Activated CD4-positive, alpha-beta T cell treated with anti-CD3 and anti-CD28 coated beads, Interleukin-2, amount 10 ng/mL, durations not matched to agents 7 days and 5 days (primary cell): ENCODE measurements at regions of chr6 and their contacts with region 1.

Region 1: DNA sequence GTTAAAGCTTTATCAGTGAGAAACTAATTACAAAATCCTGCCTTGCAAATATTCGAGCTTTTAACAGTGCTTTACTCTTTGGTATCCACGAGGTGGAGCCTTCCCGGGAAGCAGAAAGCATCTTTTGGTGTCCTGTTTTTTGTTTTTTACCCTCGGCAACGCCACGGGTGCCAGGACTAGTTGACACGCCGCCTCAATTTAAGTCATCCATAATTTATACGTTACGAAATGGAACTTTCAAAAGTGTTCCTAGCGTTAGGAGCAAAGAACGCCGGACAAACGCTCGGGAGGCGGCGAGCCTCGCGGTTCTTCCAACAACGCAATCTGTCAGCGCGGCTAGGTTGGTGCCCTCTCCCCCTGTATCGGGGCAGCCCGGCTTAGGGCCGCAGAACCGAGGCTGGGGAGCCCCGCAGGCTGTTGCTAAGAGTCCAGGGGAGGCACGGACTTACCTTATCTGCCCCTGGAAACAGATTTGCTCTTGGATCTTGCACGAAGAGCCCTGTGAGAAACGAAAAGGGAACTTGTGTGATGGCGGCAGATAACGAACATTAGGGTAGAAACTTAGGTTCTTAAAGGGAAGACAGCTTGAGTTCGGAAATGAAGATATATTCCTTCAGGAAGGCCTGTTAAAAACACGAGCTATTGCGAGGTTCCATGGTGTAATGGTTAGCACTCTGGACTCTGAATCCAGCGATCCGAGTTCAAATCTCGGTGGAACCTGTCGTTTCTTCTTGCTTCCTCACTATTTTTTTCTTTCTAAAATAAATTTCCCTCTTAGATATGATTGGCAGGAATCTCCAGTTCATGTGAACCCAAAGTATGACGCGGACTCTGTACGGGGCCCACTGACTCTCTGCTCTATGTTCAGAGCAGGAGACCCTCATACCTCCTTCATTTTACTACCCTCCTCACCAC is 46.2 kb upstream of the ZNF184 start:
- DNase-seq: peak; percentile 57
- H3K4me3 Mint-ChIP-seq: peak overlapping the region; percentile 73
- H3K27ac Mint-ChIP-seq: peak overlapping the region; percentile 77
- H3K4me1 Mint-ChIP-seq: peaks cover 20% of the 10 kb centered on the region
- H3K27me3 Mint-ChIP-seq: peaks cover 37% of the 10 kb centered on the region

Region 2: GRCh38 chr6:27503436-27504030 is 15.6 kb before region 1 on chr6:
- CTCF ChIA-PET with region 1: interaction called, 22 read pairs
- POLR2A ChIA-PET with region 1: no interaction called
- DNase-seq: peak; percentile 70
- H3K4me3 Mint-ChIP-seq: peak overlapping the region; percentile 76
- H3K27ac Mint-ChIP-seq: peak overlapping the region; percentile 65
- H3K4me1 Mint-ChIP-seq: peaks cover 29% of the 10 kb centered on the region
- H3K27me3 Mint-ChIP-seq: peaks cover 46% of the 10 kb centered on the region

Region 3: GRCh38 chr6:28747631-28748157 is 1228.6 kb after region 1 on chr6:
- CTCF ChIA-PET with region 1: no interaction called
- POLR2A ChIA-PET with region 1: no interaction called
- DNase-seq: no peak
- H3K4me3 Mint-ChIP-seq: no peak overlapping the region
- H3K27ac Mint-ChIP-seq: no peak overlapping the region
- H3K4me1 Mint-ChIP-seq: no peaks in the 10 kb centered on the region
- H3K27me3 Mint-ChIP-seq: peaks cover 46% of the 10 kb centered on the region